ENCODE measurements at regions of chr5 and their contacts with region 1.

Region 1: GRCh38 chr5:61162010-61162831 is at the start of gene SMIM15:
- DNase-seq: peak; percentile 75 to 85
- ATAC-seq: peak; percentile 94 to 96
- H3K4me3 ChIP-seq: peak within 1 kb of the TSS; percentile 87 to 99 (median 94)
- H3K27ac ChIP-seq: peak within 1 kb of the TSS; percentile 87 to 95 (median 93)
- H3K4me1 ChIP-seq: peaks cover 14 to 26% of the 10 kb centered on the region in 2 donors
- H3K27me3 ChIP-seq: no peaks in the 10 kb centered on the region
- CTCF ChIP-seq: no peak
- POLR2A ChIP-seq: peak; percentile 42 to 68
- total RNA-seq, gene SMIM15: 6.2 to 17.1 (median 10.4) TPM

Region 2: DNA sequence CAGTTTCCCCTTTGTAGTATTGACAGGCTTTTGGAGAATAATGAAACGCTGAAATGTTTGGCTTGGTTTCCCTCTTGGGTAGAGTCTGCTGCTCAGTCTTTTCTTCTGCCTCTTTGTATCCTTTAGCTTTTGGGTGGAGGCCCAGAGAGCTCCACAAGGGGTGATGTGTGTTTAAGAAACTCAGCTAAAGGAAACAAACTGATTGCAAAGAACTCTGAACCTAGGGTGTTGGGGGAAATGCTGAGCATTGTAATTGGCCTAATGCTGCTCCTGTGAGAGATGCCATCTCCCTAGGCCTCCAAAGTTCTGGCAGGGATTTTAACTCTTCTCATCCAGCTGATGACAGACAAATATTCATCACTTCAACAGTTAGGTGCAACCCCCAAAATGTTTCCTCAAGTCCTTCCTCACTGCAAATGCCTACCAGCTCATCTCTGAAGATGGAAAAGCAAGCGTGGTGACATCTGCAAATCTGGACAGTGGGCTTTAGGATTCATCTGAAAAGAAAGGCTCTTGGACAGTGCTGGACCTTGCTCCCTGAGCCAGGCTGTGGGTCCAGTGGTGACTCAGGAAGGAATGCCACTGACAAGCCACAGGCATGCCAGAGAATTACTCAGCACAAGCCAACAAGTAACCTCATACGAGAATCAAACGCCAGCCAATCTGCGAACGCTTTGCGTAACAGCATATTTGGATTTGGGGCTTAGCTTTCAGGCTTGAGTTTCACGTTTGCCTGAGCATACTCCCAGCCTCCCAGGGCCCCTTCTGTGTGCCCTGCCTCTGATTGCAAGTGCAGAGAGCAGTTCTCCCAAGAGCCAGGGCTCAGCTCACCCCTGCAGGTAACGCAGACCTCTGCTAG is 139.3 kb after region 1 on chr5:
- in situ Hi-C with region 1: no loop called
- intact Hi-C with region 1: loop called (anchors 10 kb)
- DNase-seq: peak; percentile 80 to 82
- ATAC-seq: peak; percentile 98 to 99
- H3K4me3 ChIP-seq: no peak overlapping the region
- H3K27ac ChIP-seq: no peak overlapping the region
- H3K4me1 ChIP-seq: peaks cover 16 to 21% of the 10 kb centered on the region in 2 donors
- H3K27me3 ChIP-seq: no peaks in the 10 kb centered on the region
- CTCF ChIP-seq: no peak
- POLR2A ChIP-seq: no peak

Region 3: DNA sequence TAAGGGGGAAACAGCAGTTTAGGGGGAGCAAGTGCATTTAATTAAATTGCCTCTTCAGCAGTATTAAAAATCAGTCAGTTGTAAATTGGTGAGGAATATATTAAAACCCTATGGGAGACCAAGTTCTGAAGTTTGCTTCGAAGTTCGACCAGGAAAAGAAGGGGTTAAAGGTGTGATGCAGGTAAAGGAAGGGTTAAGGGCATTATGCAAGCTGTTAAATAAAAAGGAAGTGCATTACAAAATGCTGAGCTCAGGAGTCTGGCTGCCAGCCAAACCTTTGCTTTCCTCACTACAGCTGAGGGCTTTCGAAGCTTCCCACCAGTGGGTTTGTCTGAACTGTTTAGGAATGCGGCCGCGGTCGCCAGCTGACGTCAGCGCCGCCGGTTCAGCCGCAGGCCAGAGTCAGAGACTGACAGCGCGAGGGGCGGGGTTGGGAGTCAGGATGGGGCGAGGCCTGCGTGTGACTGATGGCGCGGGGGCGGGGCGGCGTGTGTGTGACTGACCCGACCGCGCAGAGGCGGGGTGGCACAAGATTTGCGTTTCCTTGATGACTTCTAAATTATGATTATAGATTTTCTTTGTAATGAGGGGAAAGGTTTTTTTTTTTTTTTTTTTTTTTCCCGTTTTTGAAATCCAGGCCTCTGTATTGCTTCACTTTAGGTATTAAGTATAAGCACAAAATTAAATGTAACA is 246.4 kb after region 1 on chr5:
- in situ Hi-C with region 1: no loop called
- intact Hi-C with region 1: loop called (anchors 5 kb)
- DNase-seq: peak; percentile 96 to 98
- ATAC-seq: peak; percentile 97 to 98
- H3K4me3 ChIP-seq: peak overlapping the region; percentile 35 to 41 (median 36)
- H3K27ac ChIP-seq: peak overlapping the region; percentile 44 to 66 (median 56)
- H3K4me1 ChIP-seq: peaks cover 10 to 18% of the 10 kb centered on the region in 2 donors
- H3K27me3 ChIP-seq: no peaks in the 10 kb centered on the region
- CTCF ChIP-seq: no peak
- POLR2A ChIP-seq: no peak

Measured in gastrocnemius medialis (tissue), 4 donors.